CD14-positive monocyte (primary cell): ENCODE measurements at regions of chr5 and their contacts with region 1.

Region 1: DNA sequence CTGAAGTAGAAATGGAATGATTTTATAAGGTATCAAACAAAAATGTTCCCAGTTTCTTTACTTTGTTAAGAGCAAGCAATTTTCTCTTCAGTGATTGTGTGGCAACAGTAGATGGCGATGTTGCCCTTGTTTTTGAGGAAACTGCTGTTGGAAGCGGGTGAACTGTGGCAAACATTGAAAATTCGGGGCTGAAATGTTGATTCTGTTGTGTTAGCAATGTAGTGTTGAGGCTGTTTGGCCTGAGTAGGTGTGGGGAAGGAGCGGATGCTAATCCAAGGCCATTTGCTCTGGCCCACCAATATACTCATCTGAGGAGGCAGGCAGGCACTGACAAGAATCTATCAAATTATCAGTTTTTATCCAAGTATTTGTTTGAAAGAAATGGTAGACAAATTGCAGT is 129.8 kb downstream of the SLC12A2 start:
- DNase-seq: peak; percentile 9 to 40 (median 26)
- H3K4me3 ChIP-seq: no peak overlapping the region
- H3K4me3 Mint-ChIP-seq: no peak overlapping the region
- H3K27ac ChIP-seq: no peak overlapping the region
- H3K27ac Mint-ChIP-seq: no peak overlapping the region
- H3K4me1 ChIP-seq: no peaks in the 10 kb centered on the region
- H3K4me1 Mint-ChIP-seq: peaks cover 2% of the 10 kb centered on the region
- H3K27me3 ChIP-seq: no peaks in the 10 kb centered on the region
- H3K27me3 Mint-ChIP-seq: peaks cover 0 to 3% (median 2%) of the 10 kb centered on the region in 3 donors
- CTCF ChIP-seq: peak; percentile 79

Region 2: GRCh38 chr5:128498844-128499455 is 285.6 kb after region 1 on chr5:
- intact Hi-C with region 1: loop called (anchors 10 kb)
- DNase-seq: peak in 2 of 3 donors; percentile 4 to 7
- H3K4me3 ChIP-seq: no peak overlapping the region
- H3K4me3 Mint-ChIP-seq: no peak overlapping the region
- H3K27ac ChIP-seq: no peak overlapping the region
- H3K27ac Mint-ChIP-seq: no peak overlapping the region
- H3K4me1 ChIP-seq: no peaks in the 10 kb centered on the region
- H3K4me1 Mint-ChIP-seq: no peaks in the 10 kb centered on the region
- H3K27me3 ChIP-seq: no peaks in the 10 kb centered on the region
- H3K27me3 Mint-ChIP-seq: peaks cover 0 to 1% (median 0%) of the 10 kb centered on the region in 3 donors
- CTCF ChIP-seq: peak; percentile 53

Region 3: GRCh38 chr5:128674825-128675446 is 461.6 kb after region 1 on chr5:
- intact Hi-C with region 1: loop called in 1 of 2 experiments (anchors 5 kb)
- DNase-seq: peak; percentile 11 to 38 (median 20)
- H3K4me3 ChIP-seq: no peak overlapping the region
- H3K4me3 Mint-ChIP-seq: no peak overlapping the region
- H3K27ac ChIP-seq: no peak overlapping the region
- H3K27ac Mint-ChIP-seq: no peak overlapping the region
- H3K4me1 ChIP-seq: no peaks in the 10 kb centered on the region
- H3K4me1 Mint-ChIP-seq: no peaks in the 10 kb centered on the region
- H3K27me3 ChIP-seq: no peaks in the 10 kb centered on the region
- H3K27me3 Mint-ChIP-seq: peaks cover 2 to 8% (median 5%) of the 10 kb centered on the region in 3 donors
- CTCF ChIP-seq: peak; percentile 79

Region 4: DNA sequence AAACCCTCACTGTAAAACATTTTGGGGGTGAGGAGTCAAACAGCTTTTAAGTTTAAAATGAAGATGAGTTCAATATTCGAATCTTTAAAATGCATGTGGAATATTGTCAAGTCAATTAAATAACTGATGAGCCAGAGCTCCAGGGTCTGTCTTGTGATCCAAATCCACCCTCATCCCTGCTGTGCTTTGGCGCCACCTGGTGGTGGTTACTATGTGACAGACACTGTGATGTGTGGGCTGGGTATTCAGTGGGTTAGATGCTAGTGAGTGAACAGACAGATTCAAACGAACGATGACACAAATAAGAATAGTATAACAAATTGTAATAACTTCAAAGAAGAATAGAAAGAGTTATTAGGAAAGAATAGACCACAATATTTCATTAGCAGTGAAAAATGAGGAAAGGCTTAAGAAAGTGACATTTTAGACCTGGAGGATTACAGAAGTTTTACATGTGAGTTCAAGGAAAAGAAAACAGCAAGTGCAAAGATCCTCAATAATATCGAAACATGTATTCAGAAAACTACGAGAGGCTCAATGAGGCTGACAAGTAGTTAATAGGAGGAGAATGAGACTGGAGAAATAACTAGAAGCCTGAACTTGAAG is 1639.5 kb after region 1 on chr5:
- intact Hi-C with region 1: loop called in 1 of 2 experiments (anchors 10 kb)
- DNase-seq: peak; percentile 18 to 36 (median 19)
- H3K4me3 ChIP-seq: no peak overlapping the region
- H3K4me3 Mint-ChIP-seq: no peak overlapping the region
- H3K27ac ChIP-seq: no peak overlapping the region
- H3K27ac Mint-ChIP-seq: no peak overlapping the region
- H3K4me1 ChIP-seq: no peaks in the 10 kb centered on the region
- H3K4me1 Mint-ChIP-seq: no peaks in the 10 kb centered on the region
- H3K27me3 ChIP-seq: no peaks in the 10 kb centered on the region
- H3K27me3 Mint-ChIP-seq: peaks cover 0 to 4% (median 0%) of the 10 kb centered on the region in 3 donors
- CTCF ChIP-seq: peak; percentile 87